ENCODE measurements at regions of chr4 and their contacts with region 1.

Region 1: GRCh38 chr4:55758570-55758969 is 61.0 kb upstream of the EXOC1L start:
- DNase-seq: no peak
- H3K4me3 ChIP-seq: no peak overlapping the region
- H3K27me3 ChIP-seq: no peaks in the 10 kb centered on the region
- CTCF ChIP-seq: no peak

Region 2: GRCh38 chr4:55819634-55820033 is 61.1 kb after region 1 on chr4 and contains the start of gene EXOC1L:
- CTCF ChIA-PET with region 1: no interaction called
- POLR2A ChIA-PET with region 1: interaction called, 23 read pairs
- DNase-seq: no peak
- H3K4me3 ChIP-seq: no peak within 1 kb of the TSS
- H3K27me3 ChIP-seq: peaks cover 2% of the 10 kb centered on the region
- CTCF ChIP-seq: no peak
- polyA plus RNA-seq, gene EXOC1L: not detected in 2 replicates

Measured in BJ (cell line).